Mammary epithelial cell (primary cell): ENCODE measurements at regions of chr6 and their contacts with region 1.

Region 1: DNA sequence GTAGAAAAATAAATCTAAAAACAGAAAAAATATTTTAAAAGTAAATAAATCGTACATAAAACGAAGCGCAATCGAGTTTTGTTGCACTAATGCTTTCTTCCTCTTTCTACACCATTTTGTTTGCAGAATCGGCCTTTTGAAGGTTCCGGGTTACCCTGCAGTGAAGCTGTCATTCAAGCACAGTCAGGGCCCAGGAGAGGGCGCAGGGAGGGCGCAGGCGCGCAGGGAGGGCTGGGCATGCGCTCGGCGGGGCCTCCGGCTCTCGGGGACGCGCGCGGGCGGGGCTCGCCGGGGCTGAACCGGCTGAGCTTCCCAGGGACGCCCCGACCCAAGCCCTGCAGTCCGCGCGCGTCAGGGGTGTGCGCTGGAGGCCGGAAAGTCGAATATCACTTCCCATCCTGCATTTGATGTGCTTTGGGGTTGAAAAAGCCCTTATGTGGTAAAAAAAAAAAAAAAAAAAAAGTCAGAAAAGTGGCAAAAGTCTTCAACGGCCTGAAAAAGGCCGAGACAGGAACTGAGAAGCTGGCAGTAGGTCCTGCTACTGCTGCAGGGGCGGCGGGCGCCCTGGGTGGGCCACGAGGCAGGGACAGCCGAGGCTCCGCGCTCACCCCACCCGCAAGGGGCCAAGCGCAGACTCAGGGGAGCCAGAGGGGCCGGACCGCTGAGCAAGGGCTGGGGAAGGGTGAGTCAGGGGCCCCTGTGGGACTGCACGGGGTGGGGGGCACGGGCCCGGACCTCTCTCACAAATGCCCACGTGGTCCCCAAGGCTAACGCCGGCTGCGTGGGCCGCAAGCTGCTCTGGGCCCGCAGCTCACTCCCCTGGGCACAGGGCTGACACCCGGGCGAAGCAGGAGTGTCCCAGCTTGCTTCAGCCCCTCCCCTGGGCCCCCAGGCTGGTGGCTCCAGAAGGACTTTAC is 40.5 kb downstream of the THBS2 start:
- DNase-seq: peak; percentile 81
- H3K4me3 ChIP-seq: peak overlapping the region; percentile 18 to 41 (median 28)
- H3K27ac ChIP-seq: peak overlapping the region; percentile 30
- H3K4me1 ChIP-seq: peaks cover 23% of the 10 kb centered on the region
- H3K27me3 ChIP-seq: no peaks in the 10 kb centered on the region
- CTCF ChIP-seq: peak; percentile 27 to 62

Region 2: GRCh38 chr6:169162752-169163591 is 50.2 kb before region 1 on chr6:
- CTCF ChIA-PET with region 1: no interaction called
- dilution Hi-C with region 1: no loop called
- in situ Hi-C with region 1: no loop called
- intact Hi-C with region 1: loop called (anchors 1 kb)
- DNase-seq: peak; percentile 95
- H3K4me3 ChIP-seq: no peak overlapping the region
- H3K27ac ChIP-seq: peak overlapping the region; percentile 43
- H3K4me1 ChIP-seq: peaks cover 22% of the 10 kb centered on the region
- H3K27me3 ChIP-seq: no peaks in the 10 kb centered on the region
- CTCF ChIP-seq: no peak

Region 3: DNA sequence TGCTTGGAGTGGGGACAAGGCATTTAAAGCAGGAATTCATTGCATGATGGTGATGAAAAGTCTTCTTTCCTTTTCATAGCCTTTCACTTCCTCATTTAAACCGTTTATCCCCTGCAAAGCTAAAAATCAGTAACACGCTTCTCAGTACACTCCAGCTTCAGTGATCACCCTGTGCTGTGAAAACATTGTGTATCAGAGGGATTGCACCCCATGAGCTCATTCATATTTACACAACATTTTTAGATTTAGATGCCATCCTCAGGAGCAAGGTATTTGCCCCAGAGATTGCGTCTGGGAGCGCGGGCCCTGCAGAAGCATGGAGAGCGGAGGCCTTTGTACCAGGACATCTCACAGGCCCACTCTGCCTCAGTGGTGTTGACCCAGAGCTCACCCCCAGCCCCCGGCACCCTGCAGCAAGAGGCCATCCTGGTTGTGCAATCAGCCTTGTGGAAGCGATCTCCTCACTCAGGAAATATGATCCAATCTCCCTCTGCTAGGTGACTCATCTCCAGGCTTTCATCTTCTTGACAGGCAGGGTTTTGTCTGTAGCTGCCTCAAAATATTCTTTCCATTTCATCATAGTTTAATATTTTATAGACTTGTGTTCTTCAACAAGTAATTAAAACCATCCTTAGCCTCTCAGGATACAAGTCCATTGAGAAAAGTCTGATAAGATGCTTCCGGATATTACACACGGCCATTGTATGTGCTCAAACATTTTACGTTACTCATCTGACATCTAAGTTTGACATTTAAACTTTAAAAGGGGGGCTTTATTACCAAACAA is 79.4 kb after region 1 on chr6:
- CTCF ChIA-PET with region 1: no interaction called
- dilution Hi-C with region 1: no loop called
- in situ Hi-C with region 1: no loop called
- intact Hi-C with region 1: loop called (anchors 1 kb)
- DNase-seq: peak; percentile 91
- H3K4me3 ChIP-seq: no peak overlapping the region
- H3K27ac ChIP-seq: peak overlapping the region; percentile 50
- H3K4me1 ChIP-seq: peaks cover 67% of the 10 kb centered on the region
- H3K27me3 ChIP-seq: no peaks in the 10 kb centered on the region
- CTCF ChIP-seq: no peak

Region 4: GRCh38 chr6:169326067-169326799 is 113.1 kb after region 1 on chr6:
- CTCF ChIA-PET with region 1: no interaction called
- dilution Hi-C with region 1: no loop called
- in situ Hi-C with region 1: no loop called
- intact Hi-C with region 1: loop called (anchors 1 kb)
- DNase-seq: peak; percentile 52
- H3K4me3 ChIP-seq: no peak overlapping the region
- H3K27ac ChIP-seq: no peak overlapping the region
- H3K4me1 ChIP-seq: peaks cover 7% of the 10 kb centered on the region
- H3K27me3 ChIP-seq: no peaks in the 10 kb centered on the region
- CTCF ChIP-seq: peak; percentile 19 to 54